ENCODE measurements at regions of chr9 and their contacts with region 1.

Region 1: DNA sequence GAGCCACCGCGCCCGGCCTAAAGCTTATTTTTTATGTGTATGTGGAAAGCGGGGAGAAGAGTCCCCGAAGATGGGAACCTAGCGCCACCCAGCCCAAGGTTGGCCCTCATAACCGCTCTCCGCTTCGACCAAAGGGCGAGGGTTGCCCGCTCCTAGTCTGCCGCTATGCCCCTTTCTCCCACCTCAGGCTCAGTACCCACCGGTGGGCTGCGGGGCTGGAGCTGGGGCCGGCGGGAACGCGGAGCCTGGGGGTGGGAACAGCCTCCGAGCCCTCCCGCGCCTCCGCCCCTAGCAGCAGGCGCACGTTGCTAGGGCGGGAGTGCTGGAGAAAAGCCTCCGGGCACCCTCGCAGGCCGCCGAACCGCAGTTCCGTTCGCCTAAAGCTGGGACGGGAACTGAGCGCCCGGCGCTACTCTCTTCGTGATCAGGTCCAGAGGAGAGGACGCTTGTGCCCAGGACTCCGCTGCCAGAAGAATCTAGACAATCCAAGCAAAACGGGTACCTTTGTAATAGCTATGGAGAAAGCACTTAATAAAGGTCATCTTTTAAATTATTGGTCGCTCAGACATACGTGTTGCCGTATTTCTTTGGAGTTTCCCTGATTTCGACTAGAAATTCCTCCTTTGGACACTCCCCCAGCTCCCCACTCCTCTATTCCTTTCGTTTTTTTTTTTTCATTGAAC is at the start of gene WDR31:
- DNase-seq: peak; percentile 92

Region 2: GRCh38 chr9:112629671-112630485 is 710.3 kb before region 1 on chr9:
- CTCF ChIA-PET with region 1: no interaction called
- POLR2A ChIA-PET with region 1: no interaction called
- DNase-seq: no peak

Region 3: GRCh38 chr9:113231701-113232100 is 108.5 kb before region 1 on chr9:
- CTCF ChIA-PET with region 1: no interaction called
- POLR2A ChIA-PET with region 1: no interaction called
- DNase-seq: no peak

Region 4: GRCh38 chr9:113275157-113276131 is 64.7 kb before region 1 on chr9 and contains the starts of genes CDC26 and PRPF4:
- CTCF ChIA-PET with region 1: no interaction called
- POLR2A ChIA-PET with region 1: interaction called, 13 read pairs
- DNase-seq: peak; percentile 98

Region 5: GRCh38 chr9:113306566-113306965 is 33.6 kb before region 1 on chr9:
- CTCF ChIA-PET with region 1: no interaction called
- POLR2A ChIA-PET with region 1: no interaction called
- DNase-seq: no peak

Region 6: GRCh38 chr9:113328045-113328782 is 11.9 kb before region 1 on chr9:
- CTCF ChIA-PET with region 1: no interaction called
- POLR2A ChIA-PET with region 1: interaction called, 22 read pairs
- DNase-seq: no peak

Region 7: DNA sequence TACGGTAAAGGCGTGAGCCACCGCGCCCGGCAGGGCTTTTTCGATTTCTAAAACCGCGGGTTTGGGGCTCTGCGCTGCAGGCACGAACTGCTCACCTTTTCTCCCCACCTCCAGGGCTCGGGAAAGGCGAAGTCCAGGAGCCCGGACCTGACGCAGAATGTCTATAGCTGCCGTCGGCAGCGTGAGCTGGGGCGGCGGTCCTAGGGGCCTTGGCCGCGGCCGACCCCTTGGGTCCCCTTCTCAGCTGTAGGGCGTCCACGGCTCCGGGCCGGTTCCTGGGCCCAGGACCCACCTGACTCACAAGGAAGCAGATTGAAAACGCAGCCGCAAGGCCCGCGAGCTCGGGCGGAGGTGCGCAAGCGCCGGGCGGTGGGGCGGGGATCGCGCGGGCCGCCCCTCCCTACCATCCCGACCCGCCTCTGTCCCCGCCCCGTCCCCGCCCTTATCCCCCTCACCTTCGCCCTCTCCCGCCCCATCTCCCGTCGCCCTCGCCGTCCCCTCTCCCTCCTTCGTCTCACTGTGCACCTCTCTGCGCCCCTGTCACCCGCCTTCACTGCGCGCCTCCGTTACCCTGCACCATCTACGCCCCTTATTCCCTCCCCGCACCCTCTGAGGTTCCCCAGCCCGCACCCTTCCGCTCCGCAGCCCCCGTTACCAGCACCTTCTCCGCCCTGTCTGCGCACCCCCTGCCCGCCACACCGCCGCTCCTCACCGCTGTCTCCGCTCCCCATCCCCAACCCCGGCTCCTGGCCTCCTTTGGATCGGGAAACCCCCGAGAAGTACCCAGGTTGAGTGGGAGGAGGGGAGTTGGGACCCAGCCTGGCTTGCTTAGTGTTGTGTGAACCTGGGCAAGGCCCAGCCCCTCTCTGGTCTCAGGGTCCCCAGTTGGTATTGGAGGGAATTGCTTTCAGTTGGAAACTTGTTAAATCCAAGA is 36.7 kb after region 1 on chr9 and contains the start of gene HDHD3:
- CTCF ChIA-PET with region 1: no interaction called
- POLR2A ChIA-PET with region 1: interaction called, 10 read pairs
- DNase-seq: peak; percentile 94

Region 8: DNA sequence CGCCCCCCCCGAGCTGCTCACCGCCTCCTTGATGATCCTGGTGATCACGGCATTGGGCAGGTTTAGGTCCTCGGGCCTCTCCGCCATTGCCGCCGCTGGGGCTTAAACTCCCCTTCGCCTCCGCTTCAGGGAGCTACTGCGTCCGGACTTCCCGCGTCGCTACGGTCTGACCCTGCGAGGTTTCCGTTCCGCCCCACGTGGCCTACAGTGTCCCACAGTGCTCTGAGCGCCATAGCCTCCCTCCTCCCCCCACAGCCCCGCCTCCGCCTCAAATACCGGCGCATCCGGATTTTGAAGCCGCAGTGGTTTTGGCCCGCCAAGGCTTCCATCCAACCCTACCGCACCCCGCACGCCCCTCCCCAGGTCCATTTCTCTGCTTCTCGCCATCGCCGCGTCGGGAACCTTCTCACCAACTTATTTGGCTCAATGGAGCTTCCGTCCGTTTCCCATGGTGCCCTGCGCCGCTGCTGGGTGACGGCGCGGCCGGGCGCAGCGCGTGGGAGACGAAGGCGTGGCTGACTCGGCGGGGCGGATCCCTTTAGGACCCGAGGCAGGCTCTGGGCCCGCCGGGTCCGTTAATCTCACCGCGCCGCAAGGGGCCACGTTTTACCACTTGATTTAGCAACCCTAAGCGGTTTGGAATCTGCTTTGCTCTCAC is 70.2 kb after region 1 on chr9 and contains the starts of genes C9orf43 and POLE3:
- CTCF ChIA-PET with region 1: no interaction called
- POLR2A ChIA-PET with region 1: interaction called, 20 read pairs
- DNase-seq: peak; percentile 92

Region 9: DNA sequence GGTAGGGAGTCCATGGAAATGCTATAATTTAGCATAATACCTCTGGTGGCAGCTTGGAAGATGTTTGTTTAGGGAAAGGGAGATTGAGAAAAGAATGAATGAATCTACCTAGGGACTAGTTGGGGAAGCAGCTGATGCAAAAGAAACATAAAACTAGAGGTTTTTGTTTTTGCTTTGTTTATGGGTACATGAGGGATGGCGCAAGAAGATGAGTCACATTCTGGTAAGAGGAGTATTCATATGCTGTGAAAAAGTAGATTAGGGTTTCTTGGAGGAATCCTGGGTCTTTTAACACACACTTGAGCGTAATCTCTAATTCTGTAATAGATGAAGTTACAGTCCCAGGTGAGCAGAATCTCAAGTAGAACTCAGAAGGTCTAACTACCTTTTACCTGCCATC is 87.5 kb after region 1 on chr9:
- CTCF ChIA-PET with region 1: no interaction called
- POLR2A ChIA-PET with region 1: no interaction called
- DNase-seq: no peak

Measured in HEK293T (cell line).